Psoas muscle (tissue), 8 donors: ENCODE measurements at regions of chr1 and their contacts with region 1.

Region 1: GRCh38 chr1:42379794-42380585 is 602 bp upstream of the RIMKLA start:
- DNase-seq: no peak
- ATAC-seq: peak; percentile 39 to 79 (median 62)
- H3K4me3 ChIP-seq: peak overlapping the region; percentile 71
- H3K27ac ChIP-seq: no peak overlapping the region
- H3K4me1 ChIP-seq: no peaks in the 10 kb centered on the region
- H3K27me3 ChIP-seq: peaks cover 0 to 31% (median 6%) of the 10 kb centered on the region in 3 donors
- CTCF ChIP-seq: no peak

Region 2: GRCh38 chr1:41564738-41565475 is 815.1 kb before region 1 on chr1:
- intact Hi-C with region 1: loop called in 1 of 2 experiments (anchors 10 kb)
- DNase-seq: no peak
- ATAC-seq: no peak
- H3K4me3 ChIP-seq: no peak overlapping the region
- H3K27ac ChIP-seq: no peak overlapping the region
- H3K4me1 ChIP-seq: no peaks in the 10 kb centered on the region
- H3K27me3 ChIP-seq: no peaks in the 10 kb centered on the region
- CTCF ChIP-seq: no peak

Region 3: DNA sequence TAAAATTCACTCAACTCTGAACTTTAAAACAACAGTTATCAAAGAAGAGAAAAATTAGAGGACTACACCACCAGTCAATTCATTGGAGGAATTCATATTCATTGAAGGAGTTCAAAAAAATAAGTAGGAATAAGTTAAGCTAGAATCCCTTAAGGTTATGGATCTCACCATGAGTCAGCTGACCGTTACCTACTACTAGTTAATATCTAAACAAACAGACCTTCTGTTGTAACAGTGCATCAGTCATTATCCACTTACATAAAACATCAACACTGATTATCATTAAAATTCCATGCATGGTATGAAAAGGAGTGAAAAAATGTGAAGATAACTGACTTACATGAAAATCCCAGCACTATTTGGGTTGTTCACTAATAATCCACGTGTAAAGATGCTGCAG is 89.9 kb before region 1 on chr1:
- intact Hi-C with region 1: no loop called
- DNase-seq: no peak
- ATAC-seq: no peak
- H3K4me3 ChIP-seq: no peak overlapping the region
- H3K27ac ChIP-seq: no peak overlapping the region
- H3K4me1 ChIP-seq: peaks cover 4% of the 10 kb centered on the region
- H3K27me3 ChIP-seq: no peaks in the 10 kb centered on the region
- CTCF ChIP-seq: no peak